ENCODE measurements at regions of chr12 and their contacts with region 1.

Region 1: DNA sequence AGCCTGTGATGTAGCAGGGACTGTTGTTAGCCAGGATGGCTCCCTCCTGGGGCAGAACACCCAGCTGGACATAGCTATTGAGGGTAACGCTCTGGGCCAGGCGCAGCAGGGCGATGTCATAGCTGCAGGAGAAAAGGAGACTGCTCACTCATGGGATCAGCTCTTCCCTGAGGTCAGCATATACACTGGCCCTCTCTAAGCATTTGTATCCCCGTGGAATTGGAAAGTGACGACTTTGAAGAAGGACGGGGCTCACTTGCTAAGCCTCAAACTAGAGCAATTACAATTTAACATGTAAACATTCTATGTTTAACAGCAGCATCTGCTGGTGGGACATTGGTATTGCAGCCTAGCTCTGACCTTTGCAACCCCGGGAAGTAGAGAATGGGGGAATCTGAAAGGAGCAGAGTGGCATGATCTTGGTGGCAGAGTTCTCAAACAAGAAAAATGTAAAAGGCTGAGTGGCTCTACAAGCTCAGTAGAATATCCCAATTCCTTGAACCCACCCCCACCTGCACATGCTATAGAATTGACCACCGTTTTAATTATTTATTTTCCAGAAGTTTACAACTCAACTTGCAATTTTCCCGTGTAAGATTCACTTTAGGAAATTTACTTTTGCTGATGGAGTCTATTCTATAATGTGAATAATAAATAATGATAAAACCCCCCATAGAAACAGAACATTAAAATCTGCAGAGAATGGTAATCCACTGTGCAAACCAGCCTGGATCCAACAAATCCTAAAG is 5.0 kb downstream of the CELA1 start:
- DNase-seq: peak; percentile 41 to 73
- ATAC-seq: peak; percentile 80 to 96 (median 88)
- H3K4me3 ChIP-seq: peak overlapping the region; percentile 48
- H3K27ac ChIP-seq: no peak overlapping the region
- H3K4me1 ChIP-seq: no peaks in the 10 kb centered on the region
- H3K27me3 ChIP-seq: no peaks in the 10 kb centered on the region
- CTCF ChIP-seq: peak; percentile 97

Region 2: GRCh38 chr12:50825372-50825838 is 516.0 kb before region 1 on chr12:
- intact Hi-C with region 1: loop called in 1 of 2 experiments (anchors 5 kb)
- DNase-seq: no peak
- ATAC-seq: peak; percentile 72 to 82 (median 78)
- H3K4me3 ChIP-seq: no peak overlapping the region
- H3K27ac ChIP-seq: peak overlapping the region; percentile 75
- H3K4me1 ChIP-seq: peaks cover 13% of the 10 kb centered on the region
- H3K27me3 ChIP-seq: no peaks in the 10 kb centered on the region
- CTCF ChIP-seq: peak; percentile 60

Region 3: DNA sequence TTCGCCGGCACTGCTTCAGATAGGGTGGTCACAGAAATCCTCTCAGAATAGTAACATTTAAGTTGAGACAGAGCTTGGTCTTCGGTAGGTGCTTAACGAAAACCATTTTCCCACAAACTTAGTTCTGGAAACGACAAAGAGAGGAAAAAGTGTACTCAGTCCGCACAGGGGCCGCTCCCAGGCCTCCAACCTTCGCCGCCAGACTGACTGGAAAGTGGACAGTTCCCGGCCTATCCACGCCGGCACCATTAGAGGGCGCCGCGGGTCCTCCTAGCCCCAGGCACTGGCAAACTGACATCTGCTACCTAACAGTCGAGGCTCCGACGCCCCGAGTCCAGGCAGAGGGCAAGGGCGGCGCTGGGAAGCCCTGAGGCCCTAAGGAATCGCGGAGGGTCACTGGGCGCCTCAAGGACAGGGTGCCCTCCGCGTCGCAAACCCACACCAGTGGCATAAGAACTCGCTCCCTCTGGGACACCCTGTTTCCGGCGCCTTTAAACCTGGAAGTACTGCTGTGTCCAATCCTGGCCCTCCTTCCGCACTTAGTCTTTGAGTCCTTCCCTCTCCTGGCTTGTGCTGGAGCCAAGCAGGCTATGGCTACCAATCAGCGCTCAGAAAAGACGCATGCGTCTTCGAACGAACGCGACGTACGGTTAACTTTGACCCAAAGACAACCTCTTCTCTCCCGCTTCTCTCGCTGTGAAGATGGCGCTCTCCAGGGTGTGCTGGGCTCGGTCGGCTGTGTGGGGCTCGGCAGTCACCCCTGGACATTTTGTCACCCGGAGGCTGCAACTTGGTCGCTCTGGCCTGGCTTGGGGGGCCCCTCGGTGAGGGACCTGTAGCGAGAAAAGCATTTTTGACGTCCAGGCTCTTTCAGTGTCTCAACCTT is 293.5 kb before region 1 on chr12 and contains the start of gene LETMD1:
- intact Hi-C with region 1: loop called in 1 of 2 experiments (anchors 2 kb)
- DNase-seq: peak; percentile 91 to 96
- ATAC-seq: peak; percentile 97 to 99 (median 98)
- H3K4me3 ChIP-seq: peak within 1 kb of the TSS; percentile 79
- H3K27ac ChIP-seq: peak within 1 kb of the TSS; percentile 97
- H3K4me1 ChIP-seq: peaks cover 20% of the 10 kb centered on the region
- H3K27me3 ChIP-seq: no peaks in the 10 kb centered on the region
- CTCF ChIP-seq: peak; percentile 90
- total RNA-seq, gene LETMD1: 22.2 to 29.5 (median 28.3) TPM

Region 4: GRCh38 chr12:51059086-51059485 is 282.3 kb before region 1 on chr12:
- intact Hi-C with region 1: no loop called
- DNase-seq: no peak
- ATAC-seq: no peak
- H3K4me3 ChIP-seq: no peak overlapping the region
- H3K27ac ChIP-seq: no peak overlapping the region
- H3K4me1 ChIP-seq: no peaks in the 10 kb centered on the region
- H3K27me3 ChIP-seq: no peaks in the 10 kb centered on the region
- CTCF ChIP-seq: no peak

Region 5: GRCh38 chr12:51270067-51270970 is 71.1 kb before region 1 on chr12 and contains the start of gene SMAGP:
- intact Hi-C with region 1: loop called (anchors 5 kb)
- DNase-seq: peak; percentile 52 to 68
- ATAC-seq: peak; percentile 64 to 75 (median 70)
- H3K4me3 ChIP-seq: peak within 1 kb of the TSS; percentile 77
- H3K27ac ChIP-seq: peak within 1 kb of the TSS; percentile 36
- H3K4me1 ChIP-seq: no peaks in the 10 kb centered on the region
- H3K27me3 ChIP-seq: peaks cover 0 to 29% (median 0%) of the 10 kb centered on the region in 3 donors
- CTCF ChIP-seq: no peak
- total RNA-seq, gene SMAGP: 1.8 to 2.9 (median 2.2) TPM

Region 6: DNA sequence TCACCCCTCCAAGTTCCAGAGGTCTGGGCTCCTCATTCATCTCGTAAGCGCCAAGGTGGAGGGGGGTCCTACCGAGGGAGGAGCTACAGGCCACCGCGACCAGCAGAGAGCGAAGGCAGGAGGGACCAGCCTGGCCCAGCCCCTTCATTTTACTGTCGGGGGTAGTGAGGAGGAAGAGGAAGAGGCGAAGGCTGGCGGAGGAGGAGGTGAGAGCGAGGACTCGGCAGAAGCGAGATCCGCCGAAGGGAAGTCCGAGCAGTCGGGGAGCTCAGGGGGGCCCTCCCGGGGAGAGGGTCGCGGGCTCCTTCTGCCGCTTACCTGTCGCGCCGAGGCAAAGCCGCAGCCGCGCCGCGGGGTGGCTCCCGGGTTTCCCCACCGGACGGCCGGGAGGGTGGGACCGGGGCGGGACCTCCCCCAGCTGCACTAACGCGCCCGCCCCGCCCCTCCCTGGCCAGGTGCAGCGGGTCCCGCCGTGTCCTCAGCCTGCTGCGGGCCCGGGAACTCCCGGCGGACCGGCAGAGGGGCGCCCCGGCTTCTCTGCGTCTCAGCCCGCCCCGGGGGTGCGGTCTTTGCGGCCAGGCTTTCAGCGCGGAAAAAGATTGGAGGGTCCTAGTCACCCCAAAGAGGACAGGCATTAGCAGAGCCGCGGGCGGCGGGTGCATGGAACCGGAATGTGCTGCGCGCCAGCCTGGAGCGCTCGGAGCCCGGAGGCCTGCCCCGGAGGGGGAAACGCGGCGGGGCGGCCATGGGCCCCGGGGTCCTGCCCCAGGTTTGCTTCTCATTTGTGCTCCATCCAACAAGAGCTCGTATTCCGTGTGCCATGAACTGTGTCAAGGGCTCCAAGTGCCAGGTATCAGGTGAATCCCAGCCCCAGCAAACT is 50.1 kb after region 1 on chr12 and contains the start of gene GALNT6:
- intact Hi-C with region 1: no loop called
- DNase-seq: no peak
- ATAC-seq: peak; percentile 55 to 74 (median 59)
- H3K4me3 ChIP-seq: peak within 1 kb of the TSS; percentile 73
- H3K27ac ChIP-seq: no peak within 1 kb of the TSS
- H3K4me1 ChIP-seq: peaks cover 3% of the 10 kb centered on the region
- H3K27me3 ChIP-seq: peaks cover 0 to 35% (median 15%) of the 10 kb centered on the region in 3 donors
- CTCF ChIP-seq: no peak
- total RNA-seq, gene GALNT6: 0.36 to 2.1 (median 0.84) TPM